ENCODE measurements at regions of chr4 and their contacts with region 1.

Region 1: DNA sequence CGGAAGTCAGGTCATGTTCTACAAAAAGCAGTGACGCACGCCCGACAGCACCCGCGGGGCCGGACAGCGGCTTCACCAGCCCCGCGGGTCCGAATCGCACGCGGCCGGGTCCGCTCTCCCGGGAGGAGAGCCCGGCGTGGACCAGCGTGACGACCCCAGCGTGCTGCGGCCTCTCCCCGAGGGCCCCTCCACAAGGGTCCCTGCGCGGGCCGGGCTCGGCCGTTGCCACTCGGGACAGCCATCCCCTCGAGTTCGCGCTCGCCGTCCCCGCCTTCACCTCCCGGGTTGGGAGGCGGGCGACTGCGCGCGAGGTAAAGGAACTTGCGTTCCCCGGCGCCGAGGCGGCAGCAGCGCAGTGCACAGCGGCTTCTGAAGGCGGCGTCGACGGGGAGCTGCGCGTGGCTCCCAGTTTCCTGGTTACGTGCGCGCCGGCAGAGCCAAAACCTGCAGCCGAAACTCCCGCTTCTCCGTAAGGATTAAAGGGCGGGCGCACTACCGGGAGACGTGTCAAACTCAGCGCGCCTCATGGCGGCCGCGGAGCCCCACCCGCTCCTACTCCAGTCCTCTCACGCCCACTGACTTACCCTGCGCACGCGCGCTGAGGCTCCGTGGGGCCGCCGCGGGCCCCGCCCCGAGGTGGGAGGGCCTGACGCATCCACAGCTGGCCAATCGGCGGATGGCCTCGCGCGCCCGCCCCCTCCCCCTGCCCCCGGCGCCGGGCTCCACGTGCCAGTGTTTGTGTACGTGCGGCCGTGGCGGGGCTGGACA is 416 bp upstream of the LRP2BP start:
- DNase-seq: peak; percentile 97 to 98
- H3K4me3 ChIP-seq: peak overlapping the region; percentile 85
- H3K4me3 Mint-ChIP-seq: peak overlapping the region; percentile 89
- H3K27ac Mint-ChIP-seq: peak overlapping the region; percentile 91
- H3K4me1 ChIP-seq: no peaks in the 10 kb centered on the region
- H3K4me1 Mint-ChIP-seq: peaks cover 7% of the 10 kb centered on the region
- H3K27me3 ChIP-seq: no peaks in the 10 kb centered on the region
- H3K27me3 Mint-ChIP-seq: no peaks in the 10 kb centered on the region
- CTCF ChIP-seq: no peak

Region 2: GRCh38 chr4:185142912-185143595 is 253.1 kb before region 1 on chr4 and contains the start of gene SLC25A4:
- CTCF ChIA-PET with region 1: no interaction called
- POLR2A ChIA-PET with region 1: interaction called, 11 read pairs
- intact Hi-C with region 1: loop called (anchors 10 kb)
- DNase-seq: peak; percentile 88 to 95
- H3K4me3 ChIP-seq: peak within 1 kb of the TSS; percentile 88
- H3K4me3 Mint-ChIP-seq: peak within 1 kb of the TSS; percentile 88
- H3K27ac Mint-ChIP-seq: peak within 1 kb of the TSS; percentile 95
- H3K4me1 ChIP-seq: peaks cover 8% of the 10 kb centered on the region; the same call in 1 of the 2 replicates
- H3K4me1 Mint-ChIP-seq: no peaks in the 10 kb centered on the region
- H3K27me3 ChIP-seq: no peaks in the 10 kb centered on the region
- H3K27me3 Mint-ChIP-seq: no peaks in the 10 kb centered on the region
- CTCF ChIP-seq: peak; percentile 26 to 62
- total RNA-seq, gene SLC25A4: 24.1 and 24.6 TPM in 2 replicates

Region 3: GRCh38 chr4:185209031-185209851 is 186.9 kb before region 1 on chr4 and contains the start of gene SNX25:
- CTCF ChIA-PET with region 1: no interaction called
- POLR2A ChIA-PET with region 1: no interaction called
- intact Hi-C with region 1: loop called (anchors 2 kb)
- DNase-seq: peak; percentile 83 to 91
- H3K4me3 ChIP-seq: peak within 1 kb of the TSS; percentile 66
- H3K4me3 Mint-ChIP-seq: peak within 1 kb of the TSS; percentile 94
- H3K27ac Mint-ChIP-seq: peak within 1 kb of the TSS; percentile 79
- H3K4me1 ChIP-seq: peaks cover 14% of the 10 kb centered on the region; the same call in 1 of the 2 replicates
- H3K4me1 Mint-ChIP-seq: peaks cover 7% of the 10 kb centered on the region
- H3K27me3 ChIP-seq: no peaks in the 10 kb centered on the region
- H3K27me3 Mint-ChIP-seq: no peaks in the 10 kb centered on the region
- CTCF ChIP-seq: no peak
- total RNA-seq, gene SNX25: 9.3 and 10.2 TPM in 2 replicates

Region 4: GRCh38 chr4:185235843-185236503 is 160.2 kb before region 1 on chr4:
- CTCF ChIA-PET with region 1: no interaction called
- POLR2A ChIA-PET with region 1: no interaction called
- intact Hi-C with region 1: loop called (anchors 5 kb)
- DNase-seq: peak; percentile 77 to 81
- H3K4me3 ChIP-seq: no peak overlapping the region
- H3K4me3 Mint-ChIP-seq: peak overlapping the region; percentile 34
- H3K27ac Mint-ChIP-seq: peak overlapping the region; percentile 93
- H3K4me1 ChIP-seq: peaks cover 10% of the 10 kb centered on the region
- H3K4me1 Mint-ChIP-seq: peaks cover 17% of the 10 kb centered on the region
- H3K27me3 ChIP-seq: no peaks in the 10 kb centered on the region
- H3K27me3 Mint-ChIP-seq: no peaks in the 10 kb centered on the region
- CTCF ChIP-seq: no peak

Region 5: DNA sequence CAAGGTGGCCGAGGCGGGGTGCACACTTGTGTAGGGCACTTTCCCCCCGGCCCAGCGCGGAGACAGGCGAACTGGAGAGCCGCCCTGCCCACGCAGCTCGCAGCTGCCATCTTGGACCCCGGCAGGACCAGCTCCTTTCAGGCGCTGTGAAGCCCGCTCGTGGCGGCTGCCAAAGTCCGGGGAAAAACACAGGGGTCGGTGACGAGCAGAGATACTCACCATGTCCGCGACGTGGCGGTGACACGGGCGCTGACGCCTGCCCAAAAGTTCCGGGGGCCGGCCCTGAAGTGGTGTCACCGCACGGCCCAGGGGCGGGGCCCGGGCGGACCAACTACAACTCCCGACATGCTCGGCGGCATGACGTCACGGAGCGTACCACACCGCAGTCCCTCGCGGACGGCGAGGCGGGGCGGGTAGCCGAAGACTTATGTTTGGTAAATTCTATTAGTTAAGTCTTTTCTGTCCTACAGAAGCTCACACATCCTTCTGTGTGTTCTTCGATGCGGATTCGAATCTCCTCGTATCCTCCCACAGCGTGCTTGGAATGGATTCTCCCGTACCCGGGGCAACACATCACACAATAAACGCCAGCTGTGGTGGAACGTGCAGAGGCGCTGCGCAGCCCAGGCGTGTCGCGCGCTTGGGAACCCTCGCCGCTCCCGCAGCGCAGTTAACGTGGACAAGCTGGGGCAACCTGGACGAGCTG is 29.7 kb after region 1 on chr4 and contains the start of gene UFSP2:
- CTCF ChIA-PET with region 1: interaction called, 3 read pairs
- POLR2A ChIA-PET with region 1: interaction called, 7 read pairs
- intact Hi-C with region 1: loop called (anchors 1 kb)
- DNase-seq: peak; percentile 84 to 86
- H3K4me3 ChIP-seq: peak within 1 kb of the TSS; percentile 54
- H3K4me3 Mint-ChIP-seq: peak within 1 kb of the TSS; percentile 78
- H3K27ac Mint-ChIP-seq: peak within 1 kb of the TSS; percentile 76
- H3K4me1 ChIP-seq: no peaks in the 10 kb centered on the region
- H3K4me1 Mint-ChIP-seq: peaks cover 13% of the 10 kb centered on the region
- H3K27me3 ChIP-seq: no peaks in the 10 kb centered on the region
- H3K27me3 Mint-ChIP-seq: no peaks in the 10 kb centered on the region
- CTCF ChIP-seq: peak in 1 of 2 experiments; percentile 9
- total RNA-seq, gene UFSP2: 17.4 and 26.2 TPM in 2 replicates

Region 6: GRCh38 chr4:185471235-185472102 is 75.3 kb after region 1 on chr4 and contains the start of gene CCDC110:
- CTCF ChIA-PET with region 1: no interaction called
- POLR2A ChIA-PET with region 1: no interaction called
- intact Hi-C with region 1: loop called (anchors 1 kb)
- DNase-seq: peak; percentile 93
- H3K4me3 ChIP-seq: peak within 1 kb of the TSS; percentile 70
- H3K4me3 Mint-ChIP-seq: peak within 1 kb of the TSS; percentile 78
- H3K27ac Mint-ChIP-seq: no peak within 1 kb of the TSS
- H3K4me1 ChIP-seq: 0 out of 2 replicates have a peak, but pooled peaks cover 3% of the 10 kb centered on the region
- H3K4me1 Mint-ChIP-seq: no peaks in the 10 kb centered on the region
- H3K27me3 ChIP-seq: no peaks in the 10 kb centered on the region; the same call in 1 of the 2 replicates
- H3K27me3 Mint-ChIP-seq: peaks cover 29% of the 10 kb centered on the region
- CTCF ChIP-seq: peak; percentile 2 to 67
- total RNA-seq, gene CCDC110: not detected in 2 replicates

Region 7: GRCh38 chr4:186037692-186038658 is 641.8 kb after region 1 on chr4:
- CTCF ChIA-PET with region 1: interaction called, 6 read pairs
- POLR2A ChIA-PET with region 1: no interaction called
- intact Hi-C with region 1: loop called (anchors 10 kb)
- DNase-seq: peak in 1 of 2 experiments; percentile 61
- H3K4me3 ChIP-seq: no peak overlapping the region
- H3K4me3 Mint-ChIP-seq: no peak overlapping the region
- H3K27ac Mint-ChIP-seq: no peak overlapping the region
- H3K4me1 ChIP-seq: 0 out of 2 replicates have a peak, but pooled peaks cover 5% of the 10 kb centered on the region
- H3K4me1 Mint-ChIP-seq: no peaks in the 10 kb centered on the region
- H3K27me3 ChIP-seq: no peaks in the 10 kb centered on the region
- H3K27me3 Mint-ChIP-seq: peaks cover 3% of the 10 kb centered on the region
- CTCF ChIP-seq: peak; percentile 47 to 62